ENCODE measurements at regions of chr7 and their contacts with region 1.

Region 1: DNA sequence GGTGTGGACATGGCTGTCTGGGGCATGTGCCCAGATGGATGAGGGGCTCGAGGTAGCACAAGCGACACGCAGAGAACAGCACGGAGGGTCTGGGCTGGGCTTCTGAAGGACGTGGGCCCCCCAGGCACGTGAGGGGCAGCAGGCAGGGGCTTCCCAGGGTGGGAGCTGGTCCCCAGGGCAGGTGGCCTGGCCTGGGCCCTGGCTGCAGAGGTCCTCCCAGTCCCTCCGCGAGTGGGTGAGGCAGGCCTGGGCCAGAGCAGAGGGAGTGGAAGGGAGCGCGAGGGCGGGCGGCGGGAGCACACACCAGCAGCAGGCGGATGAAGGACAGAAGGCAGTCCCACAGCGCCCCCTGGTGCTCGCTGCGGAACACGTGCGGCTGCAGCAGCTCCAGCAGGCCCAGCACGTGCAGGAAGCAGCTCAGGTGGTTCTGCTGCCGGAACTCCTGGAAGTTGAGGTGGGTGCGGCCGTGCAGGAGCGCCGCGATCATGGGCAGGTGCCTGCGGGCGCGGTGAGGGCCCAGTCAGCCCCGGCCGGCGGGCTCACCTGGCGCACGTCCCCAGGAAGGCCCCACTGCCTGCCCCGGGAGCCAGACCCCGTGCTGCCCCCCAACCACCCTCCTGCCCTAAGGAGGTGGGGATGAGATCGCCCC is 14.7 kb upstream of the MICALL2 start:
- DNase-seq: no peak
- H3K4me3 ChIP-seq: no peak overlapping the region
- CTCF ChIP-seq: peak; percentile 97

Region 2: GRCh38 chr7:1086588-1087464 is 387.2 kb before region 1 on chr7:
- CTCF ChIA-PET with region 1: no interaction called
- POLR2A ChIA-PET with region 1: no interaction called
- DNase-seq: no peak
- H3K4me3 ChIP-seq: peak overlapping the region; percentile 56
- CTCF ChIP-seq: peak; percentile 83

Region 3: DNA sequence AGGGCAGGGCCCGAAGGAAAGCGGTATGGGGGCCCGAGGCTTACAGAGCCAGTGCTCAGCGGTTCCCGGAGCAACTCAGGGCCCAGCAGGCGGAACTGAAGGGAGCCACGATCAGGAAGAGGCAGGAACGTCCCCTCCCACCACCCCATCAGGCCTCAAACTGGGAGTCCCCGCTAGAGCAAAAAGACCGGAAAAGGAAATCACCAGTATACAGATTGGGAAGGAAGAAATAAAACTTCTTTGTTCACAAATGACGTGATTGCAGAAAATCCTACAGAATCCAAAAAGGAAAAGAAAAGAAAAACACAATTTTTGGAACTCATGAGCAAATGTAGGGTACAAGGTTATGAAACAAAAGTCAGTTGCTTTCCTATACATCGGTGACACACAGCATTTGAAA is 292.3 kb before region 1 on chr7:
- CTCF ChIA-PET with region 1: no interaction called
- POLR2A ChIA-PET with region 1: no interaction called
- DNase-seq: no peak
- H3K4me3 ChIP-seq: no peak overlapping the region
- CTCF ChIP-seq: no peak

Region 4: GRCh38 chr7:1225441-1226185 is 248.4 kb before region 1 on chr7:
- CTCF ChIA-PET with region 1: interaction called, 14 read pairs
- POLR2A ChIA-PET with region 1: no interaction called
- DNase-seq: no peak
- H3K4me3 ChIP-seq: no peak overlapping the region
- CTCF ChIP-seq: peak; percentile 70

Region 5: DNA sequence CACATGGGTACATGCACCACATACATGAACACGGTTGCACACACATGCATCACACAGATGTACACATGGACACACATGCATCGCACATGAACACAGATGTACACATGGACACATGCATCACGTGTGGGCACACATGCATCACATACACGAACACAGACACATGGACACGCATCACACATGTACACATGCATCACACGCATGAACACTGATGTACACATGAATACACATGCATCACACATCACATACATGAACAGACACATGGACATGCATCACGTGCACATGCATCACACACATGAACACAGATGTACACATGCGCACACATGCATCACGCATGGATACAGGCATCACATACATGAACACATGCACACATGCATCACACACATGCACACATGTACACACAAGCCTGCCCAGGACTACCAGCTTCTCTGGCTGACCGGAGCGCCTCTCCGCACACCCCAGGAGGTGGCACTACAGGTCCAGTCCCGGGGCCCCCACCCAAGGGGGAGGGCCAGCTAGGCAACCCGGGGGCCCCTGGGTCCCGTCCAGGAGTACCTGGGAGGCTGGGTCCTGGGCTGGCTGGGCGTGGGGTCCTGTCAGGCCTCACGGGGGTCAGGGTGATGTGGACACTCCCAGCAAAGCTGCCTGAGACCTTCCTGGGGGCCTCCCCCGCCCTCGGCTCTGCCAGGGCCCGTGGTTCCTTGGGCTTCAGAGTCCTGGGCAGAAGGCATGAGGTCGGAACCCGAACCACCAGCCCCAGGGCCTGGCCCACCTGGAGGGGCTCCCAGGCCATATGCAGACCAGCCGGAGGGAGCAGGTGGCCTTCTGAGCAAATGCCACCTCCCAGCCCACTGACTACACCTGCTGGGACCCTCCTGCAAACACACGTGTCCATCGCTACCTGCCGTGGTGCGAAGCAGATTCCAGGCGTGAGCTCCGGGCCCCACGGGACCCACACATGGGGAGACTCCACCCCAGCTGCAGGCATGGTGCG is 34.3 kb before region 1 on chr7:
- CTCF ChIA-PET with region 1: interaction called, 17 read pairs
- POLR2A ChIA-PET with region 1: no interaction called
- DNase-seq: no peak
- H3K4me3 ChIP-seq: no peak overlapping the region
- CTCF ChIP-seq: no peak

Region 6: DNA sequence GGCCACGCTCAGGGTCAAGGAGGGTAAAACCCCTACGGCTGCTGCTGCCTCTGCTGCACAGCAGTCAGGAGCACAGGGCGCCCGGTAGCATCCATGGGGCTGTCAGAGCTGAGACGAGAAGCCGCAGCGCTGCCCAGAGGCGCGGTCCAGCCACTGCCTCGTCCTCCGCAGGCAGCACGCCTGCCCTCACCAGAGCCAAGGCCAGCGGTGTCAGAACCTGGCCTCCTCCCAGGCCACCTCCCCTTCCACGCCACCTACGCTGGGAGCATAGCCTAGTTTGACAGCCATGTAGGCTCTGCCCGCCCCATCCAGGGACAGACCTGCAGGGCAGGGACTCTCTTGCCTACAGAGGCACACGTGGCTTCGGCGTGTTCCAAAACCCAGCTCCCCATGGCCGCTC is 14.0 kb after region 1 on chr7:
- CTCF ChIA-PET with region 1: interaction called, 28 read pairs
- POLR2A ChIA-PET with region 1: no interaction called
- DNase-seq: no peak
- H3K4me3 ChIP-seq: no peak overlapping the region
- CTCF ChIP-seq: no peak

Region 7: DNA sequence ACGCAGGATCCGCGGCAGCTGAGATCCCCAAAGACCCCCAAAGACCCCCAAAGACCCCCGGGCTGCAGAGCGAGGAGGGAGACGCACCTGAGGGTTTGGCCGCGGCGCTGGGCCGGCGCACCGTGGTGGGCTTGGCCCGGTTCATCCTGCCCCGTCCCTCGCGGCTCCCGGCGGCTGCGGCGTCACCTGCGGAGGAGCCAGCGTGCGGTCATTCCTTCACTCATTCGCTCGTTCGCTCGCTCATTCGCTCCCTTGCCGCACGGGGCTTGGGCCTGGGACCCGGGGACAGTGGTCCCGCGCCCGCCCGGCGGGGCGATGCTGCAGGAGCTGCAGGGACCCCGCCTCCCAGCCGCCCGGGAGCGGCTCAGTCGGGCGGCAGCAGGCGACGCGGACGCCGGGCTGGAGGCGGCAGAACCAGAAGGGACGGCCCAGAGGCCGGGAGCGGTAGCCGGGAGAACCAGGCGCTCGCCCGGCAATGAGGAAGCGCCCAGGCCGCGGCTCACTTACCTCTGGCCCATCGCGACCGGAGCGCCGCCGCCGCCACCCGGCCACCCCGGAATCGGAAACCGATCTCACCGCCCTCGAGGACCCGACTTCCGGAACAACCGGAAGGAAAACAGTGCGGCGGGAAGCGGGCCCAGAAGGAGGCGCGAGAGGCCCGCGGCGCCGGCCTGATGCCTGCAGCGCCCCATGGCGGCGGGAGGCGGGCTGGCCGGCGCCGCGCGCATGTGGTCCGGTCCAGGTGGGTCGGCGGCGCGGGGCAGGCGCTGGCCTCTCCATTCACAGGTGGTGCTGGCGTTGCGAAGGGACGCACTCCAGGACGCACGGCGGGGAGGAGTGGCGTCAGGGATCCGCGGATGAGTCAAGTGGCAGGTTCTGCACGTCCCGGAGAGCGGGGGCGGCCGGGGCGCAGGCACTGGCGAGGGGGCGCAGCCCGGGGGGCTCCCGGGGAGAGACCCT is 30.1 kb after region 1 on chr7 and contains the start of gene INTS1:
- CTCF ChIA-PET with region 1: interaction called, 15 read pairs
- POLR2A ChIA-PET with region 1: no interaction called
- DNase-seq: peak; percentile 16
- H3K4me3 ChIP-seq: peak within 1 kb of the TSS; percentile 91
- CTCF ChIP-seq: peak; percentile 77

Region 8: GRCh38 chr7:1593091-1593866 is 119.3 kb after region 1 on chr7:
- CTCF ChIA-PET with region 1: no interaction called
- POLR2A ChIA-PET with region 1: no interaction called
- DNase-seq: no peak
- H3K4me3 ChIP-seq: no peak overlapping the region
- CTCF ChIP-seq: peak; percentile 41

Region 9: DNA sequence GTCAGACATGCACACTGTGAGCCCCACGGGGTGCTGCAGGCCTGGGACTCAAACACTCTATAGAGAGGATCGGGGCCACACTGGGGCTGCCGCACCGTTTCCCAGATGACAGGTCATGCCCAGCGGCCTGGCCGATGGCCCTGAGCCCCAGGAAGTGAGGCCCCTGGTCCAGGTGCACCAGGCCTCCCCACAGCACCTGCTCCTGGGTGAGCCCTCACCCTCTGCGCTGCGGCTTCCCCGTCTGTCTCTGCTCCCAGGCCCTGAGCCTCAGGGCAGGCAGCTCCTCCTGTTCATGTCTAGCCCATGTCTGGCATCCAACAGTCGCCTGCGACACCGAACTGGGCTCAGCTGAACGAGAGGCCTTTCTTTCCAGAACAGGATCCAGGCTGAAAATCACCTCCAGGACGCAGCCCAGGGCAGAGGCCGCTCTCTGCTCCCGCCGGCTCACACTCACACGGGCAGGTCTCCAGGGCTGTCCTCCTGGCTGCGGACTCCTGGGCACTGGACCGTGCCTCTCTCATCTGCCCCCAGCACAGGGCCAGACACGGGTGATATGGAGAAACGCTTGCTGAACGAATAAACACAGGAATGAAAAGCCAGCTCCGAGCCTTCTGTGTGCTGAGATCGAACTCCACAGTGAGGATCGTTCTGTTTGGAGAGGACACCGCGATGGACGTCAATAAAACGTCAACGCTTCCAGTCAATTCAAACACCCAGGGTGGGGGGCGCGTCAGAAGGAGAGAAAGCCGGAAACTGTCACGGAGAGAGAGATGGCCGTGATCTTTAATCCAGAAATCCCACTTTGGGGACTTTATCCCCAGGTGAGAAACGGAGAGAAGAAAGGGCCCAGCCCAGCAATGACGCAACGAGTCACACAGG is 398.4 kb after region 1 on chr7:
- CTCF ChIA-PET with region 1: no interaction called
- POLR2A ChIA-PET with region 1: no interaction called
- DNase-seq: no peak
- H3K4me3 ChIP-seq: no peak overlapping the region
- CTCF ChIP-seq: no peak